ENCODE measurements at regions of chr1 and their contacts with region 1.

Region 1: DNA sequence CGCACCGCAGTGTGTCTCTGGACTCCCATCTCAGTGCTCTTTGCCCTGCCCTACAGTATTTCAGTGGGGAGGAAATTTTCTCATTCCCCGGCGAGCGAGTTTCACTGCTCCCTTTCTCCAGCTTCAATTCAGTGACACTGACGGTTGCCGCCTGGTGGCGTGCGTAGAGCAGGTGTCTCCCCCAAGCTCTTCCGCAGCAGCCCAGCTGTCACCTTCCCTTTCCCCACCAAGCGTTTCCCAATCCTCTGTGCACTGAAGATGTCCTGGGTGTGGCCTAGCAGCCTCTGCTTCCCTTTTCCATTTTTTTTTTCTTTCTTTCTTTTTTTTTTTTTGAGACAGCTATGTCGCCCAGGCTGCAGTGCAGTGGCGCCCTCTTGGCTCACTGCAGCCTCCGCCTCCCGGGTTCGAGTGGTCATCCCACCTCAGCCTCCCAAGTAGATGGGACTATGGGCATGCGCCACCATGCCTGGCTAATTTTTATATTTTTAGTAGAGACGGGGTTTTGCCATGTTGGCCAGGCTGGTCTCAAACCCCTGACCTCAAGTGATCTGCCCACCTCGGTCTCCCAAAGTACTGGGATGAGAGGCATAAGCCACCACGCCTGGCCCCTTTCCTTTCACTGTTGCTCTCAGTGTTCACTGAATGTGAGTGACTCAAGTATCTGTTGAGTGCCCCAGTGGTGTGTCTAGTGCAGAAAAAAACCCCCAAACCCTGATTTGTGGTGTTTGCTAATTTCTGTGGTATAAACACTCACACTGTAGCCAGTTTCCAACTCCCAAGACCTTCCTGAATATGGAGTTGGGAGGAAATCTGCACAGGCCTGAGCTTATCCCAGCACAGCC is 30.1 kb downstream of the TNFRSF1B start:
- DNase-seq: no peak
- H3K4me3 ChIP-seq: no peak overlapping the region
- H3K4me3 Mint-ChIP-seq: no peak overlapping the region
- H3K27ac ChIP-seq: no peak overlapping the region
- H3K27ac Mint-ChIP-seq: peak overlapping the region in 4 of 8 donors; percentile 9 to 86 (median 44)
- H3K4me1 ChIP-seq: peaks cover 11% of the 10 kb centered on the region
- H3K4me1 Mint-ChIP-seq: peaks cover 24 to 53% (median 27%) of the 10 kb centered on the region in 3 donors
- H3K27me3 ChIP-seq: no peaks in the 10 kb centered on the region
- H3K27me3 Mint-ChIP-seq: no peaks in the 10 kb centered on the region

Region 2: DNA sequence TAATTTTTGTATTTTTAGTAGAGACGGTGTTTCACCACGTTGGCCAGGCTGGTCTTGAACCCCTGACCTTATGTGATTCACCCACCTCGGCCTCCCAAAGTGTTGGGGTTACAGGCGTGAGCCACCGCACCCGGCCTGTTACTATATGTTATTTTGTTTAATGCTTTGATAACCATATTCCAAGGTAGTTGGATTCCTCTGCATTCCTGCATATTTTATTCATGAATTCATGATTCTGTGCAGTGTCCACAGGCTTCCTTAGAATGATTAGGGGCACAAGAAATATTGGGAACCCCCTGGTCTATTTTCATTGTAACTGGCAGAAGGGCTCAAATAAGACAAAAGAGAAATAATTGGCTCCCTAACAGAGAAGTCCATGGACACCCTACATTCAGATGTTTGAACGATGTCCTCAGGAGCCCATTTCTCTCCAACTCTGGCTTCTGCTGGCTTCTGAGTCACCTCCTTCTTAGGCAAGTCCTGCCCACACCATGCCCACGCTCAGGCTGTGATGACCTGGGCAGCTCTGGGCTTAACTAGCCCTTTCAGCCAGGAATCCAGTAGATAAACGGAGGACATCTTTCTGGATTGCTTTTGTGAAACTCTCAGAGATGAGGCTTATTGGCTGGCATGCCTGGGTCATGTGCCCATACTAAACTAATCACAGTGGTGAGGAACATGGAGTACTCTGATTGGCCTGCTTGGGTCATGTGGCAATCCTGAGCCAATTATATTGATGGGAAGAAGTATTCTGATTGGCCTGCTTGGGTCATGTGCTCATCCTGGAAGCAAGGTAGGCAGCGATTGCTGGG is 101.2 kb before region 1 on chr1:
- CTCF ChIA-PET with region 1: no interaction called
- POLR2A ChIA-PET with region 1: no interaction called
- DNase-seq: no peak
- H3K4me3 ChIP-seq: no peak overlapping the region
- H3K4me3 Mint-ChIP-seq: no peak overlapping the region
- H3K27ac ChIP-seq: no peak overlapping the region
- H3K27ac Mint-ChIP-seq: no peak overlapping the region
- H3K4me1 ChIP-seq: peaks cover 2% of the 10 kb centered on the region
- H3K4me1 Mint-ChIP-seq: peaks cover 10 to 13% (median 11%) of the 10 kb centered on the region in 3 donors
- H3K27me3 ChIP-seq: no peaks in the 10 kb centered on the region
- H3K27me3 Mint-ChIP-seq: no peaks in the 10 kb centered on the region

Region 3: GRCh38 chr1:12184008-12184681 is 12.7 kb before region 1 on chr1:
- CTCF ChIA-PET with region 1: interaction called, 3 read pairs
- POLR2A ChIA-PET with region 1: interaction called, 15 read pairs
- DNase-seq: no peak
- H3K4me3 ChIP-seq: no peak overlapping the region
- H3K4me3 Mint-ChIP-seq: no peak overlapping the region
- H3K27ac ChIP-seq: peak overlapping the region; percentile 14
- H3K27ac Mint-ChIP-seq: peak overlapping the region; percentile 68 to 99 (median 90)
- H3K4me1 ChIP-seq: peaks cover 51% of the 10 kb centered on the region
- H3K4me1 Mint-ChIP-seq: peaks cover 67 to 93% (median 73%) of the 10 kb centered on the region in 3 donors
- H3K27me3 ChIP-seq: no peaks in the 10 kb centered on the region
- H3K27me3 Mint-ChIP-seq: peaks cover 0 to 3% of the 10 kb centered on the region in 2 donors

Region 4: GRCh38 chr1:12208764-12209494 is 12.1 kb after region 1 on chr1:
- CTCF ChIA-PET with region 1: interaction called, 12 read pairs
- POLR2A ChIA-PET with region 1: interaction called, 5 read pairs
- DNase-seq: peak; percentile 72 to 87 (median 80)
- H3K4me3 ChIP-seq: no peak overlapping the region
- H3K4me3 Mint-ChIP-seq: peak overlapping the region in 5 of 7 donors; percentile 19 to 70 (median 34)
- H3K27ac ChIP-seq: no peak overlapping the region
- H3K27ac Mint-ChIP-seq: peak overlapping the region; percentile 83 to 98 (median 87)
- H3K4me1 ChIP-seq: peaks cover 46% of the 10 kb centered on the region
- H3K4me1 Mint-ChIP-seq: peaks cover 53 to 67% (median 64%) of the 10 kb centered on the region in 3 donors
- H3K27me3 ChIP-seq: no peaks in the 10 kb centered on the region
- H3K27me3 Mint-ChIP-seq: no peaks in the 10 kb centered on the region

Measured in CD8-positive, alpha-beta memory T cell (primary cell).